GM10248 (cell line): ENCODE measurements at regions of chr11 and their contacts with region 1.

Region 1: GRCh38 chr11:62295504-62295903 is 3.4 kb downstream of the SCGB1D4 start:
- DNase-seq: no peak
- CTCF ChIP-seq: no peak

Region 2: GRCh38 chr11:62309991-62310390 is 14.5 kb after region 1 on chr11:
- CTCF ChIA-PET with region 1: interaction called, 25 read pairs
- POLR2A ChIA-PET with region 1: no interaction called
- DNase-seq: no peak
- CTCF ChIP-seq: no peak

Region 3: GRCh38 chr11:62315431-62315830 is 19.9 kb after region 1 on chr11:
- CTCF ChIA-PET with region 1: interaction called, 25 read pairs
- POLR2A ChIA-PET with region 1: no interaction called
- DNase-seq: no peak
- CTCF ChIP-seq: no peak